ENCODE measurements at regions of chr15 and their contacts with region 1.

Region 1: GRCh38 chr15:89472785-89473256 is 23.6 kb downstream of the RHCG start:
- DNase-seq: no peak
- H3K4me3 ChIP-seq: no peak overlapping the region
- CTCF ChIP-seq: peak; percentile 88

Region 2: DNA sequence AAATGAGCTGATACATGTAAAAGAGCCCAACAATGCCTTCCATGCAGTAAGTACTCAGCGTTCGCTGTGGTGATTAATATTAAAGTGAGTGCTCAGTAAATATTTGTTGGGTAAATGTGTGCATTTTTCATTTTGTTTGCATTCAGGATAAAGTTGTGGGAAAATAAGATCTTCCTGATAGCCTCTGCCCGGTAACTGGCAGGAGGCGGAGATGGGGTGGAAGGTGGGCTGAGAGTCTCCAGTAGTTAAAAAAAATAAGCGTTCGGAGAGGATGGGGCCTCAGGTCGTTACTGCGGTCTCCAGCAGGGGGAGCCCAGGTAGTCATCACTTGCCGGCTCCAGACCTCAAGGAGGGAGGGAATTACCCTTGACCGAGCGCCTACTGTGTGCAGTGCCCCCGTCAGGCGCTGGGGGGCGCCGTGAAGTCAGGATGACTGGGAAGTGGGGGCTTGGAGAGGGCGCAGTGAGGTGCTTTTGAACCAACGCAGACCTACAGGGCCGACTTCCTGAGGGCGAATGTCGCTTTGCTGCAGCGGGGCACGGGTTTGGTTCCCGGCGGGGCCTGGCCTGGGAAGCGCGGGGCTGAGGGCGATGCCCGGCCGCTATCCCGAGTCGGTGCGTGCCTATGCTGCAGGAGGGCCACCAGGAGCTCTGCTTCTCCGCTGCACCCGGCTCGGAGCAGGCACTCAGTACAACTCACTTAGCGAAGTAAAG is 56.5 kb before region 1 on chr15:
- CTCF ChIA-PET with region 1: interaction called, 10 read pairs
- POLR2A ChIA-PET with region 1: no interaction called
- DNase-seq: no peak
- H3K4me3 ChIP-seq: no peak overlapping the region
- CTCF ChIP-seq: peak; percentile 74

Region 3: DNA sequence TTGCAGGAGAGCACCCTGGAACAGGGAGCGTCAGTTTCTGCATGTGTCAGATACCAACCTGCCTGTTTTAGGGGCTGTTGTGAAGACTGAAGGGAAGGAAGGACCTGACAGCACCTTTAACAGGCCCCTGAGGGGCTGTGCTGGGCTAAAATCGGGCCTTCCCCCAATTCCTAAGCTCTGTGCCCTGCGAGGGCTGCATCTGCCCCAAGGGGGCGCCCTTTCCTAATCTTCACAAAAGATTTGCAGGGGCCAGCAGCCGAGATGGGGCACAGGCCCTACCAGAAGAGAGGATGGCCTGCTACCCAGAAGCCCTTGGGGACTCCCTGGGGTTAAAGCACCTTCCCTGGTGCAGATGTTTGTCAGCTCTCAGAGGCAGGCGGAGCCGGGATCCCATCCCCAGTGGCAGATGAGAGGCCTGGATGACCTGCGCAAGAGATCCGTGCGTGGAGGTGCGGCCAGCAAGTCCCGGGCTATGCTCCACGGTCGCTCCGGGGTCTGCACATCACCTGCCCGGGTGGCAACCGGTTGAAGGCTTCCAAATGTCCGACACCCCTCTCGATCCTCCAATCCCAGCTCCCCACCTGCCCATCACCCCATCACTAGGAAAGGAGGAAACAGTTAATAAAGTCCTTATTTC is 30.0 kb before region 1 on chr15:
- CTCF ChIA-PET with region 1: interaction called, 32 read pairs
- POLR2A ChIA-PET with region 1: no interaction called
- DNase-seq: no peak
- H3K4me3 ChIP-seq: no peak overlapping the region
- CTCF ChIP-seq: peak; percentile 57

Region 4: DNA sequence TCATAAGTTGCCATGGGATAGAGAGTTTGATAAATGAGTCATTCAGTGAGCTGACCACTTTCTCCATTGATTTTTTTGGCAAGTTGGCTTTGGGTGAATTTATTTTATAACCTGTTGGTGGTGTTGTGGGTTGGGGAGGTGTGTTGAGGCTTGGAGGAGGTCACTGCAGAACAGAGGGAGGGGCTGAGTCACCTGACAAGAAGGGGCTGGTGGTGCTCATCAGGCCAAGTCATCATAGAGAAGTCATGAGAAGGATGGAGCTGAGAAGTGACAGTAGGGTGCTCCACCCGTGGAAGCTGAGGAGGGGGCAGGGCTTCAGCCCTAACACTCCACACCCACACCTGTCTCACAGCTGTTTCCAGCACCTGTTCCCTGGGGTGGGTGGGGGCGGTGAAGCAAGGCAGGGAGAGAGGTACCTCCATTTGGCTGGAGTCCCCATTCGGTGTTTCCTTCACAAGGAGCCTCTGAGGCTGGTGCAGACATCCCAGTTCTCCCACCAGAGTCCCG is 13.1 kb after region 1 on chr15:
- CTCF ChIA-PET with region 1: interaction called, 26 read pairs
- POLR2A ChIA-PET with region 1: no interaction called
- DNase-seq: no peak
- H3K4me3 ChIP-seq: no peak overlapping the region
- CTCF ChIP-seq: no peak

Region 5: GRCh38 chr15:89506026-89506686 is 33.3 kb after region 1 on chr15:
- CTCF ChIA-PET with region 1: no interaction called
- POLR2A ChIA-PET with region 1: no interaction called
- DNase-seq: no peak
- H3K4me3 ChIP-seq: no peak overlapping the region
- CTCF ChIP-seq: no peak

Region 6: DNA sequence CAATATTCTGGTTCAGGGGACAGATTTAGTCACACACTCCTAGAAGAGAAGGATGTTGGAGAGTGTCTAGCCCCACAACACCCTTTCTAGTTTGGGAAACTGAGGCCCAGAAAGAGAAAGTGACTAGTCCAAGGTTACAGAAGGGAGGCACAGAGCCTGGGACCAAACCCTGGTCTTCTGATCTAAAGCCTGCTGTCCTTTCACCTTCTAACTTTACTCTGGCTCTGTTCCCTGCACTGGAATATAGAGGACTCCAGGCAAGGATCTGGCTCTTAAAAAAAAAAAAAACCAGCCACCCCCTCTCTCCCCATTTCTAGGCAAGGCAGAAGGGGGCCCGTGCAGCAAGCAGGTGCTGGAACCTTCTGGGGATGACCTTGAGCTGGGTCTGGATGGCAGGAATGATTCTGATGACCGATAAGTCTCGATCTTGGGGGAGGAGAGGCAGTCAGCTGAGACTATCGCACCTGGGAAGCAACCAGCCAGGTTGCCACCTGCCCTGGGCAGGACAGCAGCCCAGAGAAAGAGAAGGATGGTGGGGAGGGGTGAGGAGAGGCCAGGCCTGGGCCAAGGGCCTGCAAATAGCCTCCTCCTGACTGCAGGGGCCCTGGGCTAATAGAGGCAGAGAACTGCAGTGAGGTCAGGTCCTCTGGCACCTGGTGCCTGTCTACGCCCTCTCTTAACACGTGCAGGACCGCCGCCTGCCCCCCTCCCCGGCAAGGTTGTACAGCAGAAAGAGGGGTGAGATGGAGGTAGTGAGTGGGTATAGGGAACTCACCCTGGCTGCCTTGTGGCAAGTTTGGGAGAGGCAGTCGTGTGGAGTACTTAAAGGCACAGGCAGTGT is 54.0 kb after region 1 on chr15:
- CTCF ChIA-PET with region 1: no interaction called
- POLR2A ChIA-PET with region 1: no interaction called
- DNase-seq: no peak
- H3K4me3 ChIP-seq: no peak overlapping the region
- CTCF ChIP-seq: no peak

Region 7: DNA sequence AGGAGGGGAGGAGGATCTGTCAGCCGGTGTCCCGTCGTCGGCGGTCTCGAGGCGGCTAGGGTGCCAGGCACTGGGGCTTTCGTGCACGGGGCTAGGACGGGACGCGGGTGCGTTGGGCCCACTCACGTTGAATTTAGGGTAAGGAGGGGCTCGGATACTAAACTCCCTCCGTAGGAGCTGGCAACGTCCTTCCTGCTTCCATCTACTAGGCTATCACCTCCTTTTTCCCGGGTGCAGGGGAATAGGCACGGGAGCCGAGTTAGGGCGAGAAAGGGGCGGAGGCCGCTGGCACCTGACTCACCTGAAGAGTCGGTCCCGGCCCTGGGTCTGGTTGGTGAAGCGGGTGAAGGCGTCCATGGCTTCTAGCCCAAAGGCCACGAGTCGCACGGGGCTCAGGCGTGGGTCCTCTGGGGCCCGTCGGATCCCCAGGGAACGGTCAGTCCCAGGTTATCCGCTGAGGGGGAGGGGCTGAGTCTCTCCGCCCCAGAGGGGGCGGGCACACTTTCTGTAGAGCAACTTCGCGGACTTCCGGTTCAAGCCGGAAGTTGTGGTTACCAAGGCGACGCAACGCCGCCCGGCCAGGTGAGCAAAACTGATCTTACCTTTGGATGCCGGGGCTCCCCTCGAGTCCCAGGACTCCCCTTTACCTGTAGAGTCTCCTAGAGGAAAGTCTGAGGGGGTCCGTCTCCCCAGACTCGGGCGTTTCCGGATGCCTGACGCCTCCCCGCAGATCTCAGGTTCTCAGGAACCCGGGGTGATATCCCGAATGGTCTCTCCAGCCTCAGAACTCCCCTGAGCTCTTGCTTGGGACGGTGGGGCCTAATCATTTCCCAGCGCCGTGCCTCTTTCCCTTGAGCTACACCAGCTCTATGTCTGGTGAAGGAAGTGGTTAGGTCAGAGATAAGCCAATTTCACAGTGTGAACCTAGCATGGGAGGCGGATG is 217.7 kb after region 1 on chr15 and contains the starts of genes PEX11A and WDR93:
- CTCF ChIA-PET with region 1: no interaction called
- POLR2A ChIA-PET with region 1: no interaction called
- DNase-seq: no peak
- H3K4me3 ChIP-seq: peak within 1 kb of the TSS; percentile 94
- CTCF ChIP-seq: no peak

Region 8: DNA sequence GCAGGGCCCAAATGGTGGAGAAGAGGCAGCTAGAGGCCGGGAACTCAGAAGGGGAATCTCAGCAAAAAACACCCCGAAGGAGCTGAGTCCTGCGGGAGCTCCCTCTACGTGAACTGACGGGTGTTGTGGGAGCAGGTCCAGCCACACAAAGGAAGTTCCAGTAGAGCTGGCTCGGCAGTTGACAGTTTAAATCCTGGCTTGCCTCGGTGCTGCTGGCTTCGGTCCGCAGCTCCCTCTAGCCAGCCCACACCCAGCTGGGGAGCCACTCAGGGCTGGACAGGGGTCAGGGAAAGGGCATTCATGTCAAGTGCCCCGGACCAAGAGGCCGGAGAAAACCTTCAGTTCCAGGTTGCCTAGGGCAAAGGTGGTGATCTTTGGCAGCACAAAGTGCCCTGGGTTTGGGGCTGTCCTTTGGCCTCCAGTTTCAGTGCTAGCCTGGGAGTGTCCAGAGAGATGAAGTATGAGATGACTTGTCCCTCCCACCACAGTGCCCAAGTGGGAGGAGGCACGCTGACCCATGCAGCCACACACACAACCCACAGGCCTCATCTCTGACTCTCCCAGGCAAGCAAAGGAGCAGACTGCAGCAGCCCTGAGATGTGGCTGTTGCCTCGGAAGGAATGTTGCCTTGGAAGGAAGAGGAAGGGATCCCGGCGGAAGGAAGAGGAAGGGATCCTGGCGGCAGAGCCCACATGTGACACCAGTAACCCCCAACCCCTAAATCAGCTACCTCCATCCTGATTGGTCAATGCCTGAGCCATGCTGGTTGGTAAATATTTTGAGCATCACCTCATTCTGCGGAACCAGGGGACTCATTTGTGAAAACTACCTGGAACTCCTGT is 355.6 kb after region 1 on chr15:
- CTCF ChIA-PET with region 1: no interaction called
- POLR2A ChIA-PET with region 1: no interaction called
- DNase-seq: no peak
- H3K4me3 ChIP-seq: no peak overlapping the region
- CTCF ChIP-seq: no peak